Colonic mucosa (tissue), 4 donors: ENCODE measurements at regions of chr12 and their contacts with region 1.

Region 1: DNA sequence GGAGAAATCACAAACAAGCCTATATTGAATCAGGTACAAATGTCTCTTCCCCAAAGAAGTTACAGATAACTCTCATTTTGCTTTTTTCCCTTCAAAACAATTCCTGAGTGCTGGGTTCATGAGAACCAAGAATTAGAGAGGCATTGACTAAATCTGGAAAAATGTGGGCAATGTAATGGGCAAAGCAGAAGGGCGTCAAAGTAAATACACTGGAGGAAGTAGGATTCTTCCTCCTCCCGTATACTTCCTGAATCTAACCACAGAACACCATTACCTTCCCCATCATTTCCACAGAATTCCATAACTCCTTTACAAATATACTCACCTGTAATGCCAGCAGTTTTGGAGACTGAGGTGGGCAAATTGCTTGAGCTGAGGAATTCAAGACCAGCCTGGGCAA is 3.0 kb upstream of the RBMS2 start:
- DNase-seq: no peak
- H3K4me3 ChIP-seq: no peak overlapping the region
- H3K27ac ChIP-seq: no peak overlapping the region
- H3K4me1 ChIP-seq: no peaks in the 10 kb centered on the region
- H3K27me3 ChIP-seq: no peaks in the 10 kb centered on the region
- CTCF ChIP-seq: no peak

Region 2: DNA sequence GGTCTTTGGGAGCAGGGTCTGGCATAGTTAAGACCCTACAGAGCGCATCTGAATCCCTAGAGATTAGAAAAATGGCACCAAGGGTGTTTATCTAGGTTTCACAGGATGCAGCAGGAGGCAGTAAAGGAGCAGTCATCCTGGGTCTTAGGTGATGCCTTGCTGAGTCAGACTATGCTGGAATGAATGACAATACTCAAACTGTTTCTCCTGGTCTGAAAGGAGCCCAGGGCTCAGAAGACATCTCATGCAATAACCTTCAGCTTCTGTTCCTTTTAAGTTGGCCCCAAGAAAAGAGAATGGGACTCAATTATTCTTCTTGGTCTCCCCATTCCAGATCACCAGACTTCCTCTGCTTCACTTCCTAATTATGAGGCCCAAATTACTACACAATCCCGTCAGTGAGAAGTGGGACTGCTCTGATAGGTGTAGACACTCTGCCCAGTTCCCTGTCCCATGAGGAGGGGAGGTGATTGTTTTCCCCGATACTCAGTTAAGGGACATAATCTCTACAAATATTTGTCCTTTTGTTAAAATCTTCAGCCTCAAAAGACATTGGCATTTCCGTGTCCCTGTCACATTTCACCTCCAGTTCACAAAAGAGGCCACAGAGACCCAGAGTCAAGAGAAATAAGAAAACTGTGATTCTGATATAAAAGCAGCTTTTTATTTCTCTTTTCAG is 141.1 kb before region 1 on chr12:
- intact Hi-C with region 1: no loop called
- DNase-seq: no peak
- H3K4me3 ChIP-seq: no peak overlapping the region
- H3K27ac ChIP-seq: no peak overlapping the region
- H3K4me1 ChIP-seq: no peaks in the 10 kb centered on the region
- H3K27me3 ChIP-seq: no peaks in the 10 kb centered on the region
- CTCF ChIP-seq: no peak

Region 3: GRCh38 chr12:56568146-56568545 is 49.6 kb after region 1 on chr12:
- intact Hi-C with region 1: loop called (anchors 2 kb)
- DNase-seq: no peak
- H3K4me3 ChIP-seq: no peak overlapping the region
- H3K27ac ChIP-seq: no peak overlapping the region
- H3K4me1 ChIP-seq: peaks cover 8% of the 10 kb centered on the region
- H3K27me3 ChIP-seq: no peaks in the 10 kb centered on the region
- CTCF ChIP-seq: no peak

Region 4: GRCh38 chr12:56630160-56630632 is 111.6 kb after region 1 on chr12 and contains the start of gene BAZ2A:
- intact Hi-C with region 1: loop called (anchors 5 kb)
- DNase-seq: peak; percentile 95
- H3K4me3 ChIP-seq: peak within 1 kb of the TSS; percentile 84
- H3K27ac ChIP-seq: peak within 1 kb of the TSS; percentile 91
- H3K4me1 ChIP-seq: peaks cover 20% of the 10 kb centered on the region
- H3K27me3 ChIP-seq: no peaks in the 10 kb centered on the region
- CTCF ChIP-seq: no peak
- total RNA-seq, gene BAZ2A: 85.8 to 99.2 TPM